ENCODE measurements at regions of chr1 and their contacts with region 1.

Region 1: DNA sequence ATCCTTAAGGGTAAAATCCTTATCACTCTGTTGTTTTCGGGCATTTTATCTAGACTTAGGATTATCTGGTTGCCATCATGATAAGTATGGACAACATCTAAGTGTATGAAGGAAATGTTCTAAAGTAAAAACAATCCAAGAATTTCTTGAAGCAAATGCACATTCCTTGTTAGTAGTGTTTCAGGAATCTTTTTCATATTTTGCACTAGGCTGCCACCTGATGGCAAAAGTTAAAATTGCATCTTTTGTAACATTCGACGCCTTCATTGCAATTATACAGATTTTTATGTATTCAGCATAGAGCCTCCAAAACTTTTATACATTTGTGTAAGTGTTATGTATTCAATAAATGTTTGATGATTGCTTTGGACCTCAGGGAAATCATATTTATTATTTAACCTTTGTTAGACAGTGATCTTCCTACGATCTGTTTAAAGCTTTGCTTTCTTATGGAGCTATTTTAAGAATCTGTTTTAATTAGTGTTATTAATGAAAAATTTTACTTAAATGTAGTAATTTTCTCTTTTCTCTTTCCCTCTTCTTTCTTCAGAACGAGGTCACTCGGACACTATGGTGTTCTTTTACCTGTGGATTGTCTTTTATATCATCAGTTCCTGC is 49.4 kb upstream of the KIAA1614 start:
- DNase-seq: peak; percentile 52
- H3K4me3 Mint-ChIP-seq: no peak overlapping the region
- H3K27ac Mint-ChIP-seq: no peak overlapping the region
- H3K4me1 Mint-ChIP-seq: peaks cover 8% of the 10 kb centered on the region
- H3K27me3 Mint-ChIP-seq: no peaks in the 10 kb centered on the region
- CTCF ChIP-seq: peak; percentile 48

Region 2: DNA sequence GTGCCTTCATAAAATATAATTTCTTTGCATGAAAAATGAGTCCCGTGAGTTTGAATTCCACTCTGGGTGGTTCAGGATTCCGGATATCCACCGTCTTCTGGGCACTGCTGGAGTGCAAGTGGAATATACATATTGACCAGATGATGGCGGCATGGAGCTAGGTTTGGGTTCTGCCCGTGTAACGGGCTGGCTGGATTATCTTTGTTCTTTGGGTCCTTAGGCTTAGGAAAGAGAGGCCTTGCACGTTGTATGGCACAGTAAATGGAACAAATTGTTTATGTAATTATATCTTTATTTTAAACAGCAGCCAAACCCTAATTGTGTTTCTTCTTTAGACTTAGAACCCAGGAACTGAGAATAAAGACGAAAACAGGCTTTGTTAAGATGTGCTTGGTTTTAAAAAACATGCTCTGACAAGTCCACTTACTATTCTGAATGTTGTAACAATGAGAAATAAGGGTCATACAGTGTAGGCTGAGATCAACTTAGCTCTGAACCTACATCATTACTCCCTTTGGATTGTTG is 347.3 kb before region 1 on chr1:
- CTCF ChIA-PET with region 1: interaction called, 25 read pairs
- intact Hi-C with region 1: loop called (anchors 1 kb)
- DNase-seq: peak; percentile 75
- H3K4me3 Mint-ChIP-seq: no peak overlapping the region
- H3K27ac Mint-ChIP-seq: no peak overlapping the region
- H3K4me1 Mint-ChIP-seq: peaks cover 13% of the 10 kb centered on the region
- H3K27me3 Mint-ChIP-seq: no peaks in the 10 kb centered on the region
- CTCF ChIP-seq: peak; percentile 94

Region 3: GRCh38 chr1:180533266-180533987 is 329.8 kb before region 1 on chr1:
- CTCF ChIA-PET with region 1: no interaction called
- intact Hi-C with region 1: loop called (anchors 5 kb)
- DNase-seq: peak; percentile 85
- H3K4me3 Mint-ChIP-seq: no peak overlapping the region
- H3K27ac Mint-ChIP-seq: no peak overlapping the region
- H3K4me1 Mint-ChIP-seq: peaks cover 21% of the 10 kb centered on the region
- H3K27me3 Mint-ChIP-seq: no peaks in the 10 kb centered on the region
- CTCF ChIP-seq: peak; percentile 90

Region 4: DNA sequence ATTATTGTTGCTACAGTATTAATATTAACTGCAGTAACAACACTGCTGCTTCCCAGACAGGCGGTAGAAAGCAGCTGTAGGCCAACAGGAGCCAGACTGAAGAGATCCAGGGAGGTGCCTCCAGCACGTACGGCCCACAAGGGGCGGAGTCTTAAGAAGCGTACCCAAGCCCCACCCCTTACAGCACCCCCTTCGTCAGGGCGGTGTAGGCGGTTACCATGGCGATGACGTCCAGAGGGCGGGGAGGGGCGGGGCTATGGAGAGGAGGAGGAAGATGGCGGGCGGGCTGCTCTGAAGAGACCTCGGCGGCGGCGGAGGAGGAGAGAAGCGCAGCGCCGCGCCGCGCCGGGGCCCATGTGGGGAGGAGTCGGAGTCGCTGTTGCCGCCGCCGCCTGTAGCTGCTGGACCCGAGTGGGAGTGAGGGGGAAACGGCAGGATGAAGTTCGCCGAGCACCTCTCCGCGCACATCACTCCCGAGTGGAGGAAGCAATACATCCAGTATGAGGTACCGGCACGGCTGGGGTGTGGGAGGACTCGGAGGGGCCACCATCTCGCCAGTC is 231.4 kb before region 1 on chr1 and contains the start of gene XPR1:
- CTCF ChIA-PET with region 1: no interaction called
- intact Hi-C with region 1: loop called (anchors 5 kb)
- DNase-seq: peak; percentile 98
- H3K4me3 Mint-ChIP-seq: no peak within 1 kb of the TSS
- H3K27ac Mint-ChIP-seq: no peak within 1 kb of the TSS
- H3K4me1 Mint-ChIP-seq: peaks cover 9% of the 10 kb centered on the region
- H3K27me3 Mint-ChIP-seq: peaks cover 8% of the 10 kb centered on the region
- CTCF ChIP-seq: no peak
- total RNA-seq, gene XPR1: 33.7 and 44.5 TPM in 2 replicates

Region 5: DNA sequence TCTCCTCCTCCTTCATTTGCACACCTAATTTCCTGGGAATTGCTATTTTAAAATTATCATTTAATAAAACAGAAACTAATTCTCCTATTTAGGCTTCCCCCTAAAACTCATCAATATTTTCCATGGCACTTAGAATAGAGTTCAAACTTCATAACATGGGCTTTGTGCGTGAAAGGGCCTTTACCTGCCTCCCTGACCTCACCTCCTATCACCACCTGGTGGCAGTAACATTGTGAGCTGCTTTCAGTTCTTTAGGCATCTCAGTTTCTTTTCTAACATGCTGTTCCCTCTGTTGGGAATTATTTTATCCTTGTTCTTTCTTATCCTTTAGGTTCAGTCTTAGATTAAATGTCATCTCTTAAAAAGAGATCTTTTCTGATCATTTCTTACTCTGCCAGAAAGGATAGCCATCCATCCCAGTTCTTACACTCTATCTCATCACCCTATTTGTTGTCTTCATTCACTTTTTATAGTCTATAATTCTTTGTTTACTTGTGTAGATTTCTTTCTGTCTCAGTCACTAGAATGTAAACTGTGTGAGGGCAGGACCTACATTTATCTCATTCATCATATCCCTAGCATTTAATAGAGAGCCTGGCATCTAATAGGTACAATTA is 84.4 kb before region 1 on chr1:
- CTCF ChIA-PET with region 1: interaction called, 3 read pairs
- intact Hi-C with region 1: loop called (anchors 5 kb)
- DNase-seq: peak; percentile 48
- H3K4me3 Mint-ChIP-seq: no peak overlapping the region
- H3K27ac Mint-ChIP-seq: no peak overlapping the region
- H3K4me1 Mint-ChIP-seq: peaks cover 11% of the 10 kb centered on the region
- H3K27me3 Mint-ChIP-seq: no peaks in the 10 kb centered on the region
- CTCF ChIP-seq: peak; percentile 63

Region 6: GRCh38 chr1:180923021-180923841 is 60.0 kb after region 1 on chr1:
- CTCF ChIA-PET with region 1: no interaction called
- intact Hi-C with region 1: no loop called
- DNase-seq: no peak
- H3K4me3 Mint-ChIP-seq: no peak overlapping the region
- H3K27ac Mint-ChIP-seq: no peak overlapping the region
- H3K4me1 Mint-ChIP-seq: no peaks in the 10 kb centered on the region
- H3K27me3 Mint-ChIP-seq: peaks cover 32% of the 10 kb centered on the region
- CTCF ChIP-seq: no peak

Region 7: DNA sequence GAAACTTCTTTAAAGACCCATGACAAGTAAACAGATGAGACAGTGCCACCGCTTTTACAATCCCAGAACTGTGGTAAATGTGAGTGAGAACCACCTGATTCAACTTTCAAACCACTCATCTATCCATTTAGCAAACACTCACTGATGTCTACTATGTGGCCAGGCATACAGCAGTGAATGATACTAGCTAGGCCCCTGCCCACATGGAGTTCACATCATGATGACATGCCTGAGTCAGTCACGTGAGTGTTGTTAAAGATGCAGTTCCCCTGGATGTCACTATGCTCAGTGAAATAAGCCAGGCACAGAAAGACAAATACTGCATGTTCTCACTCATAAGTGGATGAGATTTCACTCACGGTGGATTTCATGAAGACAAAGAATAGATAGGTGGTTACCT is 131.0 kb after region 1 on chr1:
- CTCF ChIA-PET with region 1: no interaction called
- intact Hi-C with region 1: no loop called
- DNase-seq: no peak
- H3K4me3 Mint-ChIP-seq: no peak overlapping the region
- H3K27ac Mint-ChIP-seq: no peak overlapping the region
- H3K4me1 Mint-ChIP-seq: no peaks in the 10 kb centered on the region
- H3K27me3 Mint-ChIP-seq: no peaks in the 10 kb centered on the region
- CTCF ChIP-seq: no peak

Region 8: GRCh38 chr1:181050922-181051321 is 187.7 kb after region 1 on chr1:
- CTCF ChIA-PET with region 1: no interaction called
- intact Hi-C with region 1: no loop called
- DNase-seq: no peak
- H3K4me3 Mint-ChIP-seq: no peak overlapping the region
- H3K27ac Mint-ChIP-seq: no peak overlapping the region
- H3K4me1 Mint-ChIP-seq: no peaks in the 10 kb centered on the region
- H3K27me3 Mint-ChIP-seq: no peaks in the 10 kb centered on the region
- CTCF ChIP-seq: no peak

Region 9: DNA sequence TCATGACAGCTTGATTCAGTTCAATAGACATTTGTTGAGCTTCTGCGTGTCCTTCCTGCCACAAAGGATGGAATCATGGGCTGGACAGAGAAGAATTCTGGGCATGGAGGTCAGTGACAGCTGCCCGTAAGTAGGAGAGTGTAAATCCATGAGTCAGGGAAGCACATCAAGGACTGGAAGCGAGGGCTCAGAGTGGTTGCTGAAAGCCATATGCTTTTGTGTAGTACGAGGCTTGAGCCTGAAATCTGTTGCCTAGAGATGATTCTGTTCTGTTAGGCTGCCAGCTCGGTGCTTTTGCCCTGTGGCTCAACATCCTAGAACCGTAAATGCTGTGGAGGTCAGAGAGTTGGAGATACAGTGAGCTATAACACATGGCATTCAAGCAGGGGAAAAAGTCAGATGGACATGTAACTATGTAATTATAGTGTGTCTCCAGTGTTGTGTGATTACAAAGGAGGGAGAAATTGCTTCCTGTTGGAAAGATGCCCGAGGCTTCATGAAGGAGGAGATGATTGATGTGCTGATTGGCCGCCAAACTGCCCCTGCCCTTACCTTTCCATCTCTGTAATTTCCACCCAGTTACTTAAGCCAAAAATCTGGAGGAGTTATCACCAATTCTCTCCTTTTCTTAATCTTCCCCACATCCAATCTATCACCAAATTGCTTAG is 527.3 kb after region 1 on chr1:
- CTCF ChIA-PET with region 1: no interaction called
- intact Hi-C with region 1: no loop called
- DNase-seq: peak; percentile 31
- H3K4me3 Mint-ChIP-seq: no peak overlapping the region
- H3K27ac Mint-ChIP-seq: no peak overlapping the region
- H3K4me1 Mint-ChIP-seq: no peaks in the 10 kb centered on the region
- H3K27me3 Mint-ChIP-seq: peaks cover 56% of the 10 kb centered on the region
- CTCF ChIP-seq: no peak

Measured in Calu3 (cell line).